GM12878 (cell line): ENCODE measurements at regions of chr6 and their contacts with region 1.

Region 1: DNA sequence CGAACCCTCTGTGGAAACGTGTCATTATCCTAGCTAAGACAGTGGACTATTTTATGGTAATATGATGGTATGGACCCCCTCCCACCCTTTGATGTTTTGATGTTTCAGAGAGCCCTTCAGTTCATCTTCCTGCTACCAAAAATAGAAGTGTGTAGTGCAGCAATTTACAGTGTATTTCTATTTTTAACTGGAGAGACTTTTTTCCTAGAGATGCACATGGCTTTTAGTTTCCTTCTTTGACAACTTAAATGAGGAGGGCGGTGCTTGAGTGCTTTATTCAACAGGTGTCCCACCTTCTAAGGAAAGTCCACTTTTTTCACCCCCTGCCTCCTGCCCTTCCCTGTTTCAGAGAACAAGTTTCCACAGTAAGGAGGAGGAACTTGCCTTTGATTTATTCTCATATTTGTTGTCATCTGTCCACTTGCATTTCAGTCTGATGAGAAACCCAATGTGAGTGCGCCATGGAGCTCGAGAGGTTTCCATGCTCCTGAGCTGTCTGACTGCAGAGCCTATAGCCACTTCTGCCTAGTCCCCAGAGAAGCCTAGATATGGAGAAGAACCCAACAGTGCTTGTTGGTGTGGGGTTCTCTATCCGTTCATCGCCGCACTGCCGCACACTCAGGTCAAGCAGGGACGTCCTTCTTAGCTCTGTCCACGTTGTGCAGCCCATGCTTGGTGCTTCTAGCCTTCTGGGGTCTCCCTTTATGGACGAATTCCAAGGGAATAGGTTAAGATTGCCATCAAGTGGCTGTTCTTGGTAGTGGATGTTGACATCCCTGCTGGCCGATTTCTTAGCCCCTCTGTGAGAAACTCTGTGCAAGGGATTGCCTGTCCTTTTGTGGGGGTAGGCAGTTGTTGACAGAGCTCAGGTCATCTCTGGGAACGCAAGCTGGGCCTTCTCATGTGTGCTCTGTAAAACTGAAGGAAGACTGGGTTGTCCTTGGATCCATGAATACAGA is 144.2 kb downstream of the JARID2 start:
- DNase-seq: peak; percentile 52
- ATAC-seq: peak; percentile 56
- H3K4me3 ChIP-seq: no peak overlapping the region
- H3K27ac ChIP-seq: peak overlapping the region; percentile 40
- H3K4me1 ChIP-seq: peaks cover 56% of the 10 kb centered on the region
- H3K27me3 ChIP-seq: no peaks in the 10 kb centered on the region
- CTCF ChIP-seq: peak; percentile 65 to 69 (median 68)
- EP300 ChIP-seq: no peak
- POLR2A ChIP-seq: no peak
- RAD21 ChIP-seq: peak; percentile 87

Region 2: GRCh38 chr6:14876778-14877613 is 513.0 kb before region 1 on chr6:
- CTCF ChIA-PET with region 1: no interaction called
- POLR2A ChIA-PET with region 1: interaction called, 3 read pairs
- RAD21 ChIA-PET with region 1: no interaction called
- SMC1A ChIA-PET with region 1: interaction called, 3 read pairs
- in situ Hi-C with region 1: no loop called
- intact Hi-C with region 1: loop called (anchors 5 kb)
- DNase-seq: peak; percentile 95
- ATAC-seq: peak; percentile 71
- H3K4me3 ChIP-seq: no peak overlapping the region; the same call in 1 of the 2 replicates
- H3K27ac ChIP-seq: peak overlapping the region; percentile 89
- H3K4me1 ChIP-seq: peaks cover 54% of the 10 kb centered on the region
- H3K27me3 ChIP-seq: no peaks in the 10 kb centered on the region
- CTCF ChIP-seq: no peak
- EP300 ChIP-seq: peak; percentile 61 to 89; a peak in 2 of 4 replicates
- POLR2A ChIP-seq: no peak
- RAD21 ChIP-seq: 0 out of 2 replicates have a peak, but pooled peaks have one; percentile 15

Region 3: GRCh38 chr6:15287670-15288375 is 102.2 kb before region 1 on chr6:
- CTCF ChIA-PET with region 1: interaction called, 7 read pairs
- POLR2A ChIA-PET with region 1: interaction called, 3 read pairs
- RAD21 ChIA-PET with region 1: interaction called, 19 read pairs
- SMC1A ChIA-PET with region 1: interaction called, 11 read pairs
- in situ Hi-C with region 1: no loop called
- intact Hi-C with region 1: no loop called
- DNase-seq: peak; percentile 78
- ATAC-seq: peak; percentile 99
- H3K4me3 ChIP-seq: peak overlapping the region; percentile 11; the same call in 1 of the 2 replicates
- H3K27ac ChIP-seq: peak overlapping the region; percentile 79
- H3K4me1 ChIP-seq: peaks cover 24% of the 10 kb centered on the region
- H3K27me3 ChIP-seq: no peaks in the 10 kb centered on the region
- CTCF ChIP-seq: no peak
- EP300 ChIP-seq: peak in 1 of 2 experiments; percentile 78; a peak in 2 of 4 replicates
- POLR2A ChIP-seq: no peak
- RAD21 ChIP-seq: no peak

Region 4: DNA sequence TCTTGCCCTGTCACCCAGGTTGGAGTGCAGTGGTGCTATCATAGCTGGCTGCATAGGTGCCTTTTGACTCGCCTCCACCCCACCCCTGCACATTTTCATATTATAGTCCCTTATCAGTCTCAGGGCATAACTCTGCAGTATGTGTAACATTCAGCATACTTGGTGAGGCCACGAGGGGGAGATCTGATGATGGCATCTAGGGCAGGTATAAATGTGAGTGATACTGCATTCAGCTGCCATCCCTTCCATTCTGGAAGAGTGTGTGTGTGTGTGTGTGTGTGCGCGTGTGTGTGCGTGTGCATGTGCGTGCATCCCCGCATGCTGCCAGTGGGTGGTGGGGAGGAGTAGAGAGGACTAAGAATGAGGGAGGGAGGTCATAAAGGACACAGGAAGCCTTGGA is 62.8 kb before region 1 on chr6:
- CTCF ChIA-PET with region 1: interaction called, 146 read pairs
- POLR2A ChIA-PET with region 1: interaction called, 12 read pairs
- RAD21 ChIA-PET with region 1: interaction called, 75 read pairs
- SMC1A ChIA-PET with region 1: interaction called, 123 read pairs
- in situ Hi-C with region 1: no loop called
- intact Hi-C with region 1: loop called (anchors 2 kb)
- DNase-seq: no peak
- ATAC-seq: peak; percentile 66
- H3K4me3 ChIP-seq: no peak overlapping the region; the same call in 1 of the 2 replicates
- H3K27ac ChIP-seq: peak overlapping the region; percentile 72
- H3K4me1 ChIP-seq: peaks cover 69% of the 10 kb centered on the region
- H3K27me3 ChIP-seq: no peaks in the 10 kb centered on the region
- CTCF ChIP-seq: peak; percentile 57 to 62 (median 60)
- EP300 ChIP-seq: no peak
- POLR2A ChIP-seq: no peak
- RAD21 ChIP-seq: peak; percentile 64

Region 5: DNA sequence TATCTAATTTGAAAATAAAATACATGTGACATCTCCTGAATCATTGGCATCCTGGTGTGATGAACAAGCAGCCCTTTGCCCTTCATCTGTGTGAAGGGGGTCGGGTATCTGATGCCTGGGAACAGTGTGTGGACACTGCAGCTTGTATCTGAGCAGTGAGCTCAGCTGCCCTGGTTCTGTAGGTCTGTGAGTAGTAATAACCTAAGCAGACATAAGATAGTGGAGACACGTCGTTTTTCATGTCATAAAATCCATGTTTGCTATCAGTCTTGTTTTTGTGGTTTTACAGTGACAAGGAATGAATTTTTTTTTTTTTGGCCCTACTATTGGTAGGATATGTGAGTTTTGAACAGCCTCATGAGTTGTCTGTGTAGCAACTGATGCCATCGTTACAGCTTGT is 11.2 kb before region 1 on chr6:
- CTCF ChIA-PET with region 1: interaction called, 4 read pairs
- POLR2A ChIA-PET with region 1: interaction called, 4 read pairs
- RAD21 ChIA-PET with region 1: interaction called, 5 read pairs
- SMC1A ChIA-PET with region 1: interaction called, 24 read pairs
- in situ Hi-C with region 1: no loop called
- intact Hi-C with region 1: no loop called
- DNase-seq: no peak
- ATAC-seq: no peak
- H3K4me3 ChIP-seq: no peak overlapping the region
- H3K27ac ChIP-seq: no peak overlapping the region
- H3K4me1 ChIP-seq: peaks cover 8% of the 10 kb centered on the region; the same call in 1 of the 2 replicates
- H3K27me3 ChIP-seq: no peaks in the 10 kb centered on the region
- CTCF ChIP-seq: no peak
- EP300 ChIP-seq: no peak
- POLR2A ChIP-seq: no peak
- RAD21 ChIP-seq: no peak

Region 6: DNA sequence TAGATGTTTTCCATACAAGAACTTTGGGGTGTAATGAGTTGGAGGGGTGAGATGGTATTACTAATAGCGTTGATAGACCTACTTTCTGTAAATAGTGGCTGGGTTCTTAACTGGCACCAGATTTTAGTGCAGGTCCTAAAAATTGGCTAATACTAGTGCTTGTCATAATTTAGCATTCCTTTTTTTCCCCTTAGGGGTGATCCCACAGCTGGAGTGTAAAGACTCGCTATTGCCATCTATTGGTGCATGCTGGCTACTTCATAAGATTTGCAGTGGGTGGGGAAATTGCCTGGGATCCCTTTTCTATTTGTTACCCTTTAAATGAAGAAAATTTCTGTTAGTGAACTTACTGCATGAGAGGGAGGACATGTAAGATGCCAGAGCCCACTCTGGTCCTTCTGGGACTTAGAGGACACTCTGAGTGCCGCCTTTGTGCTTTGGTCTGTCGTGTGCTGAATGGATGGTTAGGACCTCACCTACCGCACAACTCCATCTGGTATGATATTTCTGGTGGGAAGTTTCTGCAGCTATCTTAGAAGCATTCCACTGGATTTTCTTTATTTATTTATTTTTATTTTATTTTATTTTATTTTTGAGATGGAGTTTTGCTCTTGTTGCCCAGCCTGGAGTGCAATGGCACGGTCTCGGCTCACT is 51.3 kb after region 1 on chr6:
- CTCF ChIA-PET with region 1: interaction called, 21 read pairs
- POLR2A ChIA-PET with region 1: interaction called, 3 read pairs
- RAD21 ChIA-PET with region 1: interaction called, 17 read pairs
- SMC1A ChIA-PET with region 1: interaction called, 70 read pairs
- in situ Hi-C with region 1: no loop called
- intact Hi-C with region 1: loop called (anchors 5 kb)
- DNase-seq: no peak
- ATAC-seq: peak; percentile 74
- H3K4me3 ChIP-seq: no peak overlapping the region
- H3K27ac ChIP-seq: no peak overlapping the region
- H3K4me1 ChIP-seq: peaks cover 29% of the 10 kb centered on the region
- H3K27me3 ChIP-seq: no peaks in the 10 kb centered on the region
- CTCF ChIP-seq: peak; percentile 79 to 83 (median 79)
- EP300 ChIP-seq: no peak
- POLR2A ChIP-seq: no peak
- RAD21 ChIP-seq: peak; percentile 87

Region 7: GRCh38 chr6:15534966-15535365 is 144.9 kb after region 1 on chr6:
- CTCF ChIA-PET with region 1: no interaction called
- POLR2A ChIA-PET with region 1: no interaction called
- RAD21 ChIA-PET with region 1: no interaction called
- SMC1A ChIA-PET with region 1: no interaction called
- in situ Hi-C with region 1: no loop called
- intact Hi-C with region 1: no loop called
- DNase-seq: no peak
- ATAC-seq: peak; percentile 42; the same call in 2 of the 3 replicates
- H3K4me3 ChIP-seq: no peak overlapping the region
- H3K27ac ChIP-seq: no peak overlapping the region
- H3K4me1 ChIP-seq: no peaks in the 10 kb centered on the region
- H3K27me3 ChIP-seq: no peaks in the 10 kb centered on the region
- CTCF ChIP-seq: no peak
- EP300 ChIP-seq: no peak
- POLR2A ChIP-seq: no peak
- RAD21 ChIP-seq: no peak